ENCODE measurements at regions of chr1 and their contacts with region 1.

Region 1: GRCh38 chr1:234963180-234963903 is 165.3 kb downstream of the TOMM20 start:
- DNase-seq: peak; percentile 98
- H3K4me3 Mint-ChIP-seq: peak overlapping the region; percentile 35
- H3K27ac Mint-ChIP-seq: peak overlapping the region; percentile 97
- H3K4me1 Mint-ChIP-seq: peaks cover 72% of the 10 kb centered on the region
- H3K27me3 Mint-ChIP-seq: no peaks in the 10 kb centered on the region

Region 2: GRCh38 chr1:234933475-234933874 is 29.9 kb before region 1 on chr1:
- CTCF ChIA-PET with region 1: interaction called, 3 read pairs
- intact Hi-C with region 1: loop called (anchors 1 kb)
- DNase-seq: peak; percentile 61
- H3K4me3 Mint-ChIP-seq: no peak overlapping the region
- H3K27ac Mint-ChIP-seq: peak overlapping the region; percentile 84
- H3K4me1 Mint-ChIP-seq: peaks cover 58% of the 10 kb centered on the region
- H3K27me3 Mint-ChIP-seq: no peaks in the 10 kb centered on the region

Region 3: GRCh38 chr1:234978397-234979295 is 15.3 kb after region 1 on chr1:
- CTCF ChIA-PET with region 1: interaction called, 4 read pairs
- intact Hi-C with region 1: loop called (anchors 1 kb)
- DNase-seq: peak; percentile 81
- H3K4me3 Mint-ChIP-seq: peak overlapping the region; percentile 79
- H3K27ac Mint-ChIP-seq: peak overlapping the region; percentile 97
- H3K4me1 Mint-ChIP-seq: peaks cover 59% of the 10 kb centered on the region
- H3K27me3 Mint-ChIP-seq: no peaks in the 10 kb centered on the region

Region 4: GRCh38 chr1:235045034-235045720 is 81.8 kb after region 1 on chr1:
- CTCF ChIA-PET with region 1: no interaction called
- intact Hi-C with region 1: no loop called
- DNase-seq: no peak
- H3K4me3 Mint-ChIP-seq: no peak overlapping the region
- H3K27ac Mint-ChIP-seq: no peak overlapping the region
- H3K4me1 Mint-ChIP-seq: peaks cover 34% of the 10 kb centered on the region
- H3K27me3 Mint-ChIP-seq: no peaks in the 10 kb centered on the region

Region 5: GRCh38 chr1:235075188-235075926 is 112.0 kb after region 1 on chr1:
- CTCF ChIA-PET with region 1: no interaction called
- intact Hi-C with region 1: loop called (anchors 1 kb)
- DNase-seq: peak; percentile 83
- H3K4me3 Mint-ChIP-seq: peak overlapping the region; percentile 0
- H3K27ac Mint-ChIP-seq: peak overlapping the region; percentile 90
- H3K4me1 Mint-ChIP-seq: peaks cover 36% of the 10 kb centered on the region
- H3K27me3 Mint-ChIP-seq: no peaks in the 10 kb centered on the region